Heart left ventricle (tissue), 16 donors: ENCODE measurements at regions of chr3 and their contacts with region 1.

Region 1: DNA sequence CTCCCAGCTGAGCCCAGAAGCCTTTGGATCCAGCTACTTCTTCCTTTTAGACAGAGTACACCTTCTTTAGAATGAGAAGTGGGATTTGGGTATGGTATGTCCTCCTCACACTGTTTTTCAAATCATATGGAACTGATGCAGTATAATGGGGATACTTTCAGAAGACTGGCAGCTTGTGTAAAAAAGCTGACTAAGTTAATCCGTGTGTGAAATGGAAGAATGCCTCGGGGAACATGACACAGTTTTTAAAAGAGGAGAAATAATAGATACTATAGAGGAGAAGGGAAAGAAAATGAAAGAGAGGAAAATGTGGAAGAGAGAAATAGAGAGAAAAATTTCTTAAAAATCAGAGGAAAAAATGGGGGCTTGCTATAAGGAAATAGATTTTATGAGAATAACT is 47.7 kb downstream of the TUSC7 start:
- DNase-seq: no peak
- ATAC-seq: no peak
- H3K4me3 ChIP-seq: no peak overlapping the region
- H3K27ac ChIP-seq: no peak overlapping the region
- H3K4me1 ChIP-seq: peaks cover 0 to 3% (median 0%) of the 10 kb centered on the region in 12 donors
- H3K27me3 ChIP-seq: peaks cover 0 to 16% (median 3%) of the 10 kb centered on the region in 9 donors
- CTCF ChIP-seq: no peak
- POLR2A ChIP-seq: no peak

Region 2: GRCh38 chr3:115819785-115820384 is 937.4 kb before region 1 on chr3:
- intact Hi-C with region 1: loop called in 2 of 10 experiments (anchors 5 to 10 kb)
- DNase-seq: peak in 4 of 5 donors; percentile 51 to 71 (median 60)
- ATAC-seq: peak in 3 of 4 donors; percentile 77 to 90 (median 81)
- H3K4me3 ChIP-seq: no peak overlapping the region
- H3K27ac ChIP-seq: no peak overlapping the region
- H3K4me1 ChIP-seq: no peaks in the 10 kb centered on the region
- H3K27me3 ChIP-seq: no peaks in the 10 kb centered on the region
- CTCF ChIP-seq: peak; percentile 86 to 100 (median 92)
- POLR2A ChIP-seq: no peak

Region 3: GRCh38 chr3:115834068-115834467 is 923.2 kb before region 1 on chr3:
- intact Hi-C with region 1: loop called in 1 of 10 experiments (anchors 5 kb)
- DNase-seq: no peak
- ATAC-seq: no peak
- H3K4me3 ChIP-seq: no peak overlapping the region
- H3K27ac ChIP-seq: no peak overlapping the region
- H3K4me1 ChIP-seq: peaks cover 0 to 8% (median 0%) of the 10 kb centered on the region in 12 donors
- H3K27me3 ChIP-seq: no peaks in the 10 kb centered on the region
- CTCF ChIP-seq: no peak
- POLR2A ChIP-seq: no peak

Region 4: GRCh38 chr3:116140100-116140689 is 617.1 kb before region 1 on chr3:
- intact Hi-C with region 1: loop called in 4 of 10 experiments (anchors 5 to 10 kb)
- DNase-seq: no peak
- ATAC-seq: no peak
- H3K4me3 ChIP-seq: no peak overlapping the region
- H3K27ac ChIP-seq: no peak overlapping the region
- H3K4me1 ChIP-seq: peaks cover 0 to 7% (median 0%) of the 10 kb centered on the region in 12 donors
- H3K27me3 ChIP-seq: no peaks in the 10 kb centered on the region
- CTCF ChIP-seq: peak; percentile 43 to 77 (median 68)
- POLR2A ChIP-seq: no peak

Region 5: GRCh38 chr3:116614795-116615362 is 142.4 kb before region 1 on chr3:
- intact Hi-C with region 1: loop called in 3 of 10 experiments (anchors 5 to 10 kb)
- DNase-seq: no peak
- ATAC-seq: no peak
- H3K4me3 ChIP-seq: no peak overlapping the region
- H3K27ac ChIP-seq: no peak overlapping the region
- H3K4me1 ChIP-seq: no peaks in the 10 kb centered on the region
- H3K27me3 ChIP-seq: no peaks in the 10 kb centered on the region
- CTCF ChIP-seq: peak in 6 of 12 donors; percentile 8 to 30 (median 20)
- POLR2A ChIP-seq: no peak

Region 6: GRCh38 chr3:116707531-116707930 is 49.8 kb before region 1 on chr3:
- intact Hi-C with region 1: no loop called
- DNase-seq: no peak
- ATAC-seq: no peak
- H3K4me3 ChIP-seq: no peak overlapping the region
- H3K27ac ChIP-seq: no peak overlapping the region
- H3K4me1 ChIP-seq: no peaks in the 10 kb centered on the region
- H3K27me3 ChIP-seq: no peaks in the 10 kb centered on the region
- CTCF ChIP-seq: no peak
- POLR2A ChIP-seq: no peak

Region 7: GRCh38 chr3:117278424-117279190 is 521.3 kb after region 1 on chr3:
- intact Hi-C with region 1: no loop called
- DNase-seq: no peak
- ATAC-seq: peak in 1 of 4 donors; percentile 31
- H3K4me3 ChIP-seq: no peak overlapping the region
- H3K27ac ChIP-seq: no peak overlapping the region
- H3K4me1 ChIP-seq: no peaks in the 10 kb centered on the region
- H3K27me3 ChIP-seq: no peaks in the 10 kb centered on the region
- CTCF ChIP-seq: no peak
- POLR2A ChIP-seq: no peak